ENCODE measurements at regions of chr20 and their contacts with region 1.

Region 1: DNA sequence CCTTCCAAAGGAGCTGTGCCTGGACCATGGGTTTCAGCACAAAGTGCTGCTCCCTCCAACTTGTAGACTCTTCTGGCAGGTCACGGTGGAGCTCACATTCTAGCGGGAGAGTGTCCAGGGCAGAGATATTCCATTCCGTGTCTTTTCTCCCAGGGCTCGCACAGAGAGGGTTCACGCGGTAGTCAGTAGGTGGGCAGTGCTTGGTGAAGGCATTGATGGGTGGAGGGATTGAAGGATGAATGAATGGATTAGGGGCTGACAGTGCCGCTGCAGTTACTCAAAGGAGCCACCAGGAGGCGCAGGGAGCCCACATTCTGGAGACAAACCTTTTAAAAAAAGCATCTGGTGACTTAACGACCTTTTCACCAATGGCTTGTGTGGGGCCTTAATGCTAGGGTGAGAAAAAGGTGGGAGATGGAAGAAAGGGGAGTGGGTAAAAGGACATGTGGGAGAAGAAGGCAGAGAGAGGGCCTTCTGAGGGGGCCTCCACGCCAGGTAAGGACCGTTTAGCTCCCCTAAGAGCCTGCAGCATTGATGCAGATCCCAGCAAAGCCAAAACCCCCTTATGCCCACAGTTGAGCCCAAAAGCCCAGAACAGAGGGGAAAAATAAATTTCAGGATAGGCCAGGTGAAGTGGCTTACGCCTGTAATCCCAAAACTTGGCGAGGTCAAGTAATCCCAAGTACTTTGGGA is 17.5 kb upstream of the FAM110A start:
- DNase-seq: peak; percentile 60
- ATAC-seq: peak; percentile 77
- H3K4me3 ChIP-seq: no peak overlapping the region
- H3K27ac ChIP-seq: no peak overlapping the region
- H3K4me1 ChIP-seq: no peaks in the 10 kb centered on the region
- H3K27me3 ChIP-seq: no peaks in the 10 kb centered on the region; the same call in 1 of the 2 replicates
- CTCF ChIP-seq: peak; percentile 98

Region 2: GRCh38 chr20:528923-529604 is 287.0 kb before region 1 on chr20:
- CTCF ChIA-PET with region 1: no interaction called
- POLR2A ChIA-PET with region 1: interaction called, 19 read pairs
- in situ Hi-C with region 1: no loop called
- intact Hi-C with region 1: no loop called
- DNase-seq: peak; percentile 92
- ATAC-seq: peak; percentile 80
- H3K4me3 ChIP-seq: no peak overlapping the region
- H3K27ac ChIP-seq: peak overlapping the region; percentile 48; the same call in 1 of the 2 replicates
- H3K4me1 ChIP-seq: peaks cover 17% of the 10 kb centered on the region
- H3K27me3 ChIP-seq: no peaks in the 10 kb centered on the region
- CTCF ChIP-seq: no peak

Region 3: GRCh38 chr20:543369-544152 is 272.5 kb before region 1 on chr20 and contains the start of gene CSNK2A1:
- CTCF ChIA-PET with region 1: no interaction called
- POLR2A ChIA-PET with region 1: no interaction called
- in situ Hi-C with region 1: no loop called
- intact Hi-C with region 1: no loop called
- DNase-seq: peak; percentile 95
- ATAC-seq: peak; percentile 99
- H3K4me3 ChIP-seq: peak within 1 kb of the TSS; percentile 80 to 99
- H3K27ac ChIP-seq: peak within 1 kb of the TSS; percentile 97
- H3K4me1 ChIP-seq: peaks cover 8% of the 10 kb centered on the region; the same call in 1 of the 2 replicates
- H3K27me3 ChIP-seq: no peaks in the 10 kb centered on the region
- CTCF ChIP-seq: no peak
- total RNA-seq, gene CSNK2A1: 191 TPM

Region 4: DNA sequence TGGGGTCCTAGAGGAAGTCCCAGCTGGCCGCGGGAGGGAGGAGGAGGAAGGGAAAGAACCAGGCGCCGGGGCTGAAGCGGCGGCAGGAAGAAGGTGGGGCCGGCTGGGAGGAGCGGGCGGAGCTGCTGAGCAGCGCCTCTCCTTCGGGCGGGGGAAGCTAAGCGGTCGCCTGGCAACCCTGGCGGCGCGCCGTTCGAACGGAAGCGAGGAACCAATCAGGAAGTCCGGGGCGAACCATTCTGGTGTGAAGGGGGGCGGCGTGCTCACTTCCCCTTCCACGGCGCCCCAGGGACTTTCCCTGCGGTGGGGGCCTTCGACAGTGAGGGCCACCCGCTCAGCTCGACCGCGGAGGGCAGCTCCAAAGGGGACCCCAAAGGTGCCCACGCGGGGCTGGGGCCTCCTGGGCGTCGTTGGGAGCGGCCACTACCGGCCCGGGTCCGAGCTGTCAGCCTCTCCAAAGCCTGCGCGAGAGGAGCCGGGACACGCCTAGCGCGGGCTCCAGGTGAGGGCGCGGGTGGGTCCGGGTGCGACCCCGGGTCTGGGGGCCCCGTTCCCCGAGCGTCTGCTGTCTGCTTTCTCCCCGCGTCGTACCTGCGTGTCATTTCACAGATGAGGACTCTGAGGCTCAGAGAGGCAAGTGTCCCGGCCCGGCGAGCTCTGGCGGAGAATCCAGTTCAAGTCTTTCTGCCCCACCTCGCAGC is 17.5 kb after region 1 on chr20 and contains the start of gene FAM110A:
- CTCF ChIA-PET with region 1: interaction called, 10 read pairs
- POLR2A ChIA-PET with region 1: no interaction called
- in situ Hi-C with region 1: no loop called
- intact Hi-C with region 1: no loop called
- DNase-seq: peak; percentile 71
- ATAC-seq: peak; percentile 98
- H3K4me3 ChIP-seq: peak within 1 kb of the TSS; percentile 77 to 85
- H3K27ac ChIP-seq: peak within 1 kb of the TSS; percentile 86
- H3K4me1 ChIP-seq: peaks cover 7% of the 10 kb centered on the region; the same call in 1 of the 2 replicates
- H3K27me3 ChIP-seq: no peaks in the 10 kb centered on the region
- CTCF ChIP-seq: no peak
- total RNA-seq, gene FAM110A: 7.8 TPM

Region 5: GRCh38 chr20:844473-845225 is 28.6 kb after region 1 on chr20:
- CTCF ChIA-PET with region 1: interaction called, 13 read pairs
- POLR2A ChIA-PET with region 1: no interaction called
- in situ Hi-C with region 1: no loop called
- intact Hi-C with region 1: no loop called
- DNase-seq: no peak
- ATAC-seq: peak; percentile 75
- H3K4me3 ChIP-seq: peak overlapping the region in 1 of 2 experiments; percentile 8; a peak in 1 of 4 replicates
- H3K27ac ChIP-seq: no peak overlapping the region
- H3K4me1 ChIP-seq: peaks cover 8% of the 10 kb centered on the region
- H3K27me3 ChIP-seq: no peaks in the 10 kb centered on the region
- CTCF ChIP-seq: no peak

Region 6: GRCh38 chr20:856361-857040 is 40.4 kb after region 1 on chr20:
- CTCF ChIA-PET with region 1: no interaction called
- POLR2A ChIA-PET with region 1: interaction called, 11 read pairs
- in situ Hi-C with region 1: no loop called
- intact Hi-C with region 1: no loop called
- DNase-seq: peak; percentile 67
- ATAC-seq: peak; percentile 85
- H3K4me3 ChIP-seq: no peak overlapping the region
- H3K27ac ChIP-seq: no peak overlapping the region
- H3K4me1 ChIP-seq: peaks cover 7% of the 10 kb centered on the region; the same call in 1 of the 2 replicates
- H3K27me3 ChIP-seq: no peaks in the 10 kb centered on the region
- CTCF ChIP-seq: no peak

Region 7: GRCh38 chr20:956330-956951 is 140.4 kb after region 1 on chr20:
- CTCF ChIA-PET with region 1: interaction called, 50 read pairs
- POLR2A ChIA-PET with region 1: no interaction called
- in situ Hi-C with region 1: no loop called
- intact Hi-C with region 1: loop called (anchors 1 kb)
- DNase-seq: peak; percentile 72
- ATAC-seq: peak; percentile 87
- H3K4me3 ChIP-seq: no peak overlapping the region
- H3K27ac ChIP-seq: no peak overlapping the region
- H3K4me1 ChIP-seq: no peaks in the 10 kb centered on the region; the same call in 1 of the 2 replicates
- H3K27me3 ChIP-seq: 0 out of 2 replicates have a peak, but pooled peaks cover 9% of the 10 kb centered on the region
- CTCF ChIP-seq: peak; percentile 94

Region 8: DNA sequence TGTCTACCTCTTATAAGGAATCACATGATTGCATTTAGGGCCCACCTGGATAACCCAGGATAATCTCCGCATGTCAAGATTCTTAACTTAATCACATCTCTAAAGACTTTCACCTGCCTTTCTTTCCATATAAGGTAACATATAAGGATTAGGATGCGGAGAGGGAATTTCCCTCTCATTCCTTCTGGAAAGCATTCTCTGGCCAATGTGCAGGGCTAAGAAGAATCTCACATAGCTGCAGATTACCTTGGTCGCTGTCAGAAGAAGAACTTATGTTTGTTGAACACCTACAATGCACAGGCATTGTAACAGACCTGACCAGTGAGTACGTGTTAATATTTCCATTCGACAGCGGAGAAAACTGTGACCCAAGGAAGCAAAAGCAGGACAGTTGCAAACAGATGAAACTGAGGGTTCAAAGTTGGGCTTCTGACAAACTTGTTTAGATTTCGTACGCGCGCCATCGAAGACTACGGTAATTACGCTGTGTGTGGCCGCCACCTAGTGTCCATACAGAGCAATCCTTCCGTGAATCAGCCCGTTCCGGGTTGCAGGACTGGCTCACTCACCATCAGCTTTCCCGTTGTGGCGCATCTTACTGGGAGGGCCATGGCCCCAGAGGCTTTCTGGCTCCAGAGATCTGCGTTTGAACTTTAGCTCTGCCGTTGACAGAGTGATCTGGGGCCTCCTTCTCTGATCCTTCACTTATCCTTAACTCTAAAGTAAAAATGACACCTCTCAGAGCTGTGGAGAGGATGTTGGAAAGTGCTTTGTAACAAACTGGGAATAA is 396.7 kb after region 1 on chr20:
- CTCF ChIA-PET with region 1: interaction called, 8 read pairs
- POLR2A ChIA-PET with region 1: no interaction called
- in situ Hi-C with region 1: no loop called
- intact Hi-C with region 1: loop called (anchors 10 kb)
- DNase-seq: peak; percentile 45
- ATAC-seq: peak; percentile 98
- H3K4me3 ChIP-seq: 0 out of 4 replicates have a peak overlapping the region, but pooled peaks of 1 of the 2 experiments have one; percentile 2
- H3K27ac ChIP-seq: no peak overlapping the region
- H3K4me1 ChIP-seq: 0 out of 2 replicates have a peak, but pooled peaks cover 2% of the 10 kb centered on the region
- H3K27me3 ChIP-seq: peaks cover 19% of the 10 kb centered on the region
- CTCF ChIP-seq: peak; percentile 91